ENCODE measurements at regions of chr1 and their contacts with region 1.

Region 1: DNA sequence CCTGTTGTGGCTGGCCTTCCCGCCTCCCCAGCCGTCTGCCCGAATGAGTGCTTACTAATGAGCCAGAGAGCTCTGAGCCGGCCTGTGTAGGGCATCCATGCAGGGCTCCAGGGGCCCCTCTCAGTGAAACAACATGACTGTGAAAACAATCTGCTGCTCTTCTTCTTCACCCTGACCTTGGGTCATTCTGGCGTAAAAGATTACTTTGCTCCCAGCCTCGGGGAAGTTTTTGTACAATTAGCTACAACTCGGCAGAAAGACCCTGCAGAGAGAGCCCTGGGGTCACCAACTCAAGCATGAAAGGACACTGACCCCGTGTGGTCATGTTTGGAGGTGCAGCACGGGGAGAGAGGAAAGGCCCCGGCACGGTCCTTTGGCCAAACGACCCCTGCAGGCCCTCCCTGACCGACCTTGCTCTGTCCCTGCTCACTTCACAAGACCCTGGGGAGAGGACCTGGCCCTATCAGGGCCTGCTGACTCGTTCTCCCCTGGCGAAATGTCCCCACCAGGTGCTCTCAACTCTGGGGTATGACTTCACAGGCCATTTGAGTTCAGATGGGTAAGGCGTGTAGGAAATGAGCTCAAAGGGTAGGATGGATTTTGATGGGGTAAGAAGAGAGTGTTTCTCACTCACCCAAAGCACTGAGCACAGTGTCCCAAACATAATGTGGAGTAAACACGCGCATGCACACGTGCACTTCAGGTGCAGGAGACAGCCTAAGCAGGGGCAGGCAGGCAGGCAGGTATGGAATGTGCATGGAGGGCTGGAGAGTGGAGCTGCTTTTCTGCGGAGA is 22.9 kb upstream of the FAM20B start:
- DNase-seq: peak; percentile 59 to 94
- H3K4me3 ChIP-seq: no peak overlapping the region
- CTCF ChIP-seq: peak in 1 of 3 donors; percentile 23
- POLR2A ChIP-seq: no peak

Region 2: DNA sequence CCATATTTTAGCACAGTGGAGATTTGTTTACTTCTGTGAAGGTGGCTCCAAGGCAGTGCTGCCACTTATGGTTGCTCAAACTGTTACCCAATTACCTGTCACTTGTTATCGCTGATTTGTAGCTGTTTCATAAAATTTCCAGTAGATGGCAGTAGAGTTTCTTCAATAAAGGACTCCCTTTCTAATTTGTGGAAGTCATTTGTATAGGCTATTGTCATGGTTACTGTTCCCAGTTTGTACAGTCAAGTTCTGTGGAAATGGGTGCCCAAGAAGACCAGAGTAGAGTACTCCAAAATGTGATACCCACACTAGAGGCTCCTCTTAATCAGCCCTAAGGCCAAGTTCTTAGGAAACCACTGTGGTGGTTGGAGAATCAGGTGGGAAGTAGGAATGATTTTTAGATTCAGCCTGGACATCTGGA is 692.1 kb before region 1 on chr1:
- intact Hi-C with region 1: loop called (anchors 10 kb)
- DNase-seq: no peak
- H3K4me3 ChIP-seq: no peak overlapping the region
- CTCF ChIP-seq: no peak
- POLR2A ChIP-seq: no peak

Region 3: GRCh38 chr1:178542560-178543356 is 460.0 kb before region 1 on chr1:
- intact Hi-C with region 1: loop called (anchors 5 kb)
- DNase-seq: peak; percentile 85 to 99
- H3K4me3 ChIP-seq: peak overlapping the region; percentile 67
- CTCF ChIP-seq: peak in 2 of 3 donors; percentile 58 to 63
- POLR2A ChIP-seq: no peak